ENCODE measurements at regions of chr2 and their contacts with region 1.

Region 1: GRCh38 chr2:68467077-68467960 is at the starts of genes APLF and FBXO48:
- DNase-seq: peak; percentile 99
- ATAC-seq: peak; percentile 94
- H3K4me3 Mint-ChIP-seq: peak within 1 kb of the TSS; percentile 98
- H3K27ac Mint-ChIP-seq: peak within 1 kb of the TSS; percentile 92
- H3K4me1 Mint-ChIP-seq: peaks cover 34% of the 10 kb centered on the region
- H3K27me3 Mint-ChIP-seq: peaks cover 2% of the 10 kb centered on the region
- total RNA-seq, gene APLF: 2.2 to 2.6 TPM
- total RNA-seq, gene FBXO48: 2.4 to 2.6 TPM

Region 2: GRCh38 chr2:68452168-68452900 is 15.0 kb before region 1 on chr2:
- CTCF ChIA-PET with region 1: interaction called, 21 read pairs
- POLR2A ChIA-PET with region 1: interaction called, 5 read pairs
- DNase-seq: no peak
- ATAC-seq: no peak
- H3K4me3 Mint-ChIP-seq: no peak overlapping the region
- H3K27ac Mint-ChIP-seq: no peak overlapping the region
- H3K4me1 Mint-ChIP-seq: peaks cover 5% of the 10 kb centered on the region
- H3K27me3 Mint-ChIP-seq: no peaks in the 10 kb centered on the region

Region 3: GRCh38 chr2:68506170-68506569 is 38.9 kb after region 1 on chr2:
- CTCF ChIA-PET with region 1: interaction called, 13 read pairs
- POLR2A ChIA-PET with region 1: interaction called, 3 read pairs
- DNase-seq: no peak
- ATAC-seq: no peak
- H3K4me3 Mint-ChIP-seq: no peak overlapping the region
- H3K27ac Mint-ChIP-seq: no peak overlapping the region
- H3K4me1 Mint-ChIP-seq: peaks cover 10% of the 10 kb centered on the region
- H3K27me3 Mint-ChIP-seq: no peaks in the 10 kb centered on the region

Region 4: GRCh38 chr2:68709421-68709911 is 242.1 kb after region 1 on chr2:
- CTCF ChIA-PET with region 1: interaction called, 69 read pairs
- POLR2A ChIA-PET with region 1: interaction called, 4 read pairs
- DNase-seq: peak; percentile 39
- ATAC-seq: peak; percentile 84
- H3K4me3 Mint-ChIP-seq: no peak overlapping the region
- H3K27ac Mint-ChIP-seq: peak overlapping the region; percentile 74
- H3K4me1 Mint-ChIP-seq: peaks cover 33% of the 10 kb centered on the region
- H3K27me3 Mint-ChIP-seq: peaks cover 9% of the 10 kb centered on the region

Region 5: DNA sequence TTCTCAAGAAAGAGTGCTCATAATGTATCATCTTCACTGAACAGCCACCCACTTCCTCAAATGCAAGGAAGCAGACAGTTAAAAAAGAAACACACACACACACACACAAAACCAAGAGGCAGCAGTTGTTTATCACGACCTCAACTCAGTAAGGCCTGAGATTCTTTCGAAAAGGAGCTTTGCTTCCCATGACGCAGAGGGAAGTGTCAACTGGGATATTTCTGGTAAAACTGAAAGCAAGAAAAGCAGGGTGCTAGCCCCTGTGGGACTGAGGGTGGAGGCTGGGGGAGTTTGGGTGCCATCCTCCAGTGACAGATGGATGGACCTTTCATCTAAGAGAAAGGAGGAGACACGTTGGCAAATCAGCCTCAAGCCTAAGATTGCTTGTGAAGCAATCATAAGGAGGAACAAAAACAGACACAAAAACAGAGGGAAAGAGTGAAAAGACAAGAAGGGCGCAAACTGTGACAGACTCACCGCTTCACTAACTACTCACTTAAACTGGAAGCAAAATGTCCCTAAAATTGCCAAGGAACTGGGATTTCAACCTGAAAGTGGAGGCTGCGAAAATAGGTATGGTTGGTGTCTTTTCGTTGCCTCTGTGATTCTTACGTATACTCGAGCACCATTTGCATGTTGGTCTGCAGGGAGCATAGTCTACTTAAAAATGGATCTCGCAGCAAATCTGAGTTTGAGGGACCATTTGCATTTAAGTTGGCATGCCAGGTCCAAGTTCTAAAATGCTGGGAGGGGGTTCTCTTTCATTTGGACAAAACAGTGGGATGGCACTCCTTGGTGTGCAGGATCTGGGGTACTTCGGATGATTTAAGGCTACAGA is 267.6 kb after region 1 on chr2 and contains the start of gene ARHGAP25:
- CTCF ChIA-PET with region 1: interaction called, 16 read pairs
- POLR2A ChIA-PET with region 1: no interaction called
- DNase-seq: peak; percentile 67
- ATAC-seq: peak; percentile 59
- H3K4me3 Mint-ChIP-seq: no peak within 1 kb of the TSS
- H3K27ac Mint-ChIP-seq: no peak within 1 kb of the TSS
- H3K4me1 Mint-ChIP-seq: peaks cover 35% of the 10 kb centered on the region
- H3K27me3 Mint-ChIP-seq: no peaks in the 10 kb centered on the region
- total RNA-seq, gene ARHGAP25: 68.2 to 68.7 TPM

Region 6: DNA sequence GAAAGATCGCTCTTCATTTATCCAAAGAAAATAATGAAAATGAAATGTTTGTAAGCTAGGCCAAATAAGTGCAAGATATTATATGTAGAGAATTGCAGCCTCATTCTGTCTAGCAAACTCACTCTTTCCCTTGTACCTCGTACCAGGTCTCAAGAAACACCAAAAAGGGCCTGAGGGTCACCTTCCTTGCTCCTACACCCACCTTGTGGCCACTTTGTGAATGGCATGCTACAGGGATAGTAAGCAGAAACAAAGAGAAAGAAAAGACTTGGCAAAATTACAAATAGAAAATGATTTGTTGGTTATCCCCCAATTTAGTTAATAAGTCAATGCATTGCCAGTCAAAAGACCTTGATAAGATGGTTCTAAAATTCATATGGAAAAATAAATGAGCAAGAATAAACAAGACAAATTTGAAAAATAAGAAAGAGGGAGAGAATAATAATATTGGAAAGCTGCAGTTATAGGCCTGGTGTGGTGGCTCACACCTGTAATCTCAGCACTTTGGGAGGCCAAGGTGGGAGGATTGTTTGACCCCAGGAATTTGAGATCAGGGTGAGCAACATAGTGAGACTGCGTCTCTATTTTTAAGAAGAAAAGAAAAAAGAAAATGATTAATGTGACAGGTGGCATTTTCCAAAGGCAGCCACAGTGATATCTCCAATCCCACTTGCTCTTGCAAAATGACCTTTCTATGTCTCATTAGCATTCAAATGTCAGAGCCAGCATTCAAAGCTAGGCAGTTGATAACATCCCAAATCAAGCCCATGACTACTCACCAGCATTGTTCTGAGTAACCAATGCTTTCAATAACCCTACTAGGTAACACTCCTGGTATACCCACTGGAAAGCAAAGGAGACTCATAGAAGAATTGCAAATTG is 442.7 kb after region 1 on chr2:
- CTCF ChIA-PET with region 1: interaction called, 20 read pairs
- POLR2A ChIA-PET with region 1: interaction called, 12 read pairs
- DNase-seq: peak; percentile 84
- ATAC-seq: no peak
- H3K4me3 Mint-ChIP-seq: no peak overlapping the region
- H3K27ac Mint-ChIP-seq: peak overlapping the region; percentile 5
- H3K4me1 Mint-ChIP-seq: peaks cover 37% of the 10 kb centered on the region
- H3K27me3 Mint-ChIP-seq: no peaks in the 10 kb centered on the region

Measured in activated CD8-positive, alpha-beta T cell treated with anti-CD3 and anti-CD28 coated beads, Interleukin-2, amount 10 ng/mL, durations not matched to agents 7 days and 5 days (primary cell).